ENCODE measurements at regions of chr2 and their contacts with region 1.

Region 1: GRCh38 chr2:94996305-94997100 is 29.0 kb upstream of the MAL start:
- DNase-seq: no peak
- CTCF ChIP-seq: no peak

Region 2: DNA sequence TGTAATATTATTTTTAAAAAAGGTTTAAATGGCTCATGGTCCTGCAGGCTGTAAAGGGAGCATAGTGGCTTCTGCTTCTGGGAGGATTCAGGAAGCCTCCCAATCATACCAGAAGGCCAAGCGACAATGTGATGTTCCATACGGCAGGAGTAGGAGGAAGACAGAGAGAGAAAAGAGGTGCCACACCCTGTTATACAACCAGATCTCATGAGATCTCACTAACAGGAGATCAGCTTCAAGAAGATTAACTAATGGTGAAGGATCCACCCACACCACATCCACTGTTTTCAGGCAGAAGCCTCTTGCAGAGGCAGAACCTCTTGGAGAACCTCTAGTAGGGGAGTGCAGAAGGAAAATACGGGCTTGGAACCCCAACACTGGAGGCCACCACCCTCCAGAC is 229.2 kb before region 1 on chr2:
- CTCF ChIA-PET with region 1: no interaction called
- POLR2A ChIA-PET with region 1: no interaction called
- DNase-seq: no peak
- CTCF ChIP-seq: no peak

Region 3: GRCh38 chr2:94956797-94957391 is 39.6 kb before region 1 on chr2:
- CTCF ChIA-PET with region 1: no interaction called
- POLR2A ChIA-PET with region 1: no interaction called
- DNase-seq: peak; percentile 39
- CTCF ChIP-seq: peak; percentile 77

Region 4: GRCh38 chr2:94986392-94986963 is 10.0 kb before region 1 on chr2:
- CTCF ChIA-PET with region 1: interaction called, 14 read pairs
- POLR2A ChIA-PET with region 1: no interaction called
- DNase-seq: peak; percentile 67
- CTCF ChIP-seq: peak; percentile 54

Region 5: GRCh38 chr2:95006588-95006987 is 10.1 kb after region 1 on chr2:
- CTCF ChIA-PET with region 1: no interaction called
- POLR2A ChIA-PET with region 1: no interaction called
- DNase-seq: no peak
- CTCF ChIP-seq: no peak

Region 6: DNA sequence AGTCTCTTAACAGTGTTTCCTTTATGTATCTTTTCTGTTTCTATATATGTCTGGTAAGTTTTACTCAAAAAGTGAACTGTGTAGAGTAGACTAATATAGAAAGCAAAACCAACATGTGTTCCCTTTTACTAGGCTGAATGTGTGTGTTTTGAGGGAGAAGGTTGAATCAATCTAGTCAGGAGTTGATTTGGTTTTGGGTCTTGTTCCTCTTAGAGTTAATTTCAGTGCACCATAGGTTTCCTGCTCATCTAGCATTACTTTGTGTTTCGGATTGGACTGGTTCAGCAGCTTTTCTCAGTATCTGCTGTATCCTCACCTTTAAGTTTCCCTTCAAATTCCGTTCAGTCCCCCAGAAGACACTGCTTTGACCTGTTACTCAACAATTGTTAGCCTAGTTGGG is 543.3 kb after region 1 on chr2:
- CTCF ChIA-PET with region 1: no interaction called
- POLR2A ChIA-PET with region 1: no interaction called
- DNase-seq: peak; percentile 33
- CTCF ChIP-seq: no peak

Measured in GM10248 (cell line).